Activated T-helper 1 cell treated with anti-CD3 and anti-CD28 coated beads, Interleukin-12 subunit alpha, Interleukin-12 subunit beta, Interleukin-2, Interleukin-4 antibody, amounts not matched to agents 30 ng/mL and 10 ng/mL and 1 ng/mL, durations not matched to agents 14 hours and 24 hours and 36 hours (primary cell): ENCODE measurements at regions of chr1 and their contacts with region 1.

Region 1: GRCh38 chr1:197868751-197869489 is 33.5 kb upstream of the C1orf53 start:
- DNase-seq: peak; percentile 25
- H3K4me3 Mint-ChIP-seq: no peak overlapping the region
- H3K27ac Mint-ChIP-seq: no peak overlapping the region
- H3K4me1 Mint-ChIP-seq: no peaks in the 10 kb centered on the region
- H3K27me3 Mint-ChIP-seq: peaks cover 29% of the 10 kb centered on the region

Region 2: DNA sequence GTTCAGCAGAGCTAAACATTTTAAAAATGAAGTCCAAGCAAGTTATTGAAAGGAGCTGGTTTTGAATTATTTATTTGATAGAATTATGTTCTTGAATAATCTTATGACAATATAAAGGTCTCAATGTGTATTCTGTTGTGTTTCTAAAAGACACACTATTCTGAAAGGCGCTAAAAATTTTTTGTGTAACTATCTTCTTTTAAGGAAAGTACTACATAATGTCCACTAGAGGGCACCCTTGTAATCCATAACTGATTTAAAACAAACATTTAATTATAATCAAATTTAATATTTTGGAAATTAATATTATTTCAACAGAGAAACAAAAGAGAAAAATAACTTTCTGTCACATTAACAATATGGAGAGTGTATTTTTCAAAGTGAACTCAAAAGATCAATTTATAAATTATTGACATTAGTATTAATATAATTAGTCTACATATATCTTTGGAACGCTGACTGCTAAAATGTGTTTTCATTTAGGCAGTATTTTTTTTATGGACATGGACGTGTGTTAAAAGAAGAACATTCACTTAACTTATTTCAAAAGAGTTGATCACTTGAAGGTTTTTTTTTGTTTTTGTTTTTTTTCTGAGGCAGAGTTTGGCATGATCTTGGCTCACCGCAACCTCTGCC is 342.1 kb before region 1 on chr1:
- intact Hi-C with region 1: loop called (anchors 1 kb)
- DNase-seq: no peak
- H3K4me3 Mint-ChIP-seq: no peak overlapping the region
- H3K27ac Mint-ChIP-seq: no peak overlapping the region
- H3K4me1 Mint-ChIP-seq: no peaks in the 10 kb centered on the region
- H3K27me3 Mint-ChIP-seq: no peaks in the 10 kb centered on the region

Region 3: GRCh38 chr1:197614916-197615692 is 253.8 kb before region 1 on chr1:
- intact Hi-C with region 1: loop called (anchors 1 kb)
- DNase-seq: no peak
- H3K4me3 Mint-ChIP-seq: no peak overlapping the region
- H3K27ac Mint-ChIP-seq: no peak overlapping the region
- H3K4me1 Mint-ChIP-seq: no peaks in the 10 kb centered on the region
- H3K27me3 Mint-ChIP-seq: no peaks in the 10 kb centered on the region

Region 4: DNA sequence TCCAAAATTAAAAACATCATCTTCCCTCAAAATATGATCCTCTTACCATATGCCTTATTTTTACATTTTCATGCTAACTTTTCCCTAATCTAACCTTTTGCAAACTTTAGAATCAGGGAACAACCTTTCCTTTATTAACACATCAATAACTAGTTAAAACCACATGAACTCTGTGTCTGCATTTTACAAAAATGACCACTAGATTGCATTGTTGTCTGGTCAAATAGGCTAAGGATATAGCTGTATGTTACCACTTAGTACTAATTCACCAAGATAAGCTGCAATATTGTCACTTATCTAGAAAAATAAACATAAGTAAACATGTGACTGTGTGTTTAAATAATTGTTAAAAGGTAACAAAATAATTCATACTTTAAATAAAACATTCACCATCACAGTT is 176.0 kb before region 1 on chr1:
- intact Hi-C with region 1: loop called (anchors 5 kb)
- DNase-seq: no peak
- H3K4me3 Mint-ChIP-seq: no peak overlapping the region
- H3K27ac Mint-ChIP-seq: no peak overlapping the region
- H3K4me1 Mint-ChIP-seq: peaks cover under 1% of the 10 kb centered on the region
- H3K27me3 Mint-ChIP-seq: no peaks in the 10 kb centered on the region

Region 5: GRCh38 chr1:197915862-197916499 is 47.1 kb after region 1 on chr1:
- intact Hi-C with region 1: no loop called
- DNase-seq: no peak
- H3K4me3 Mint-ChIP-seq: peak overlapping the region; percentile 71
- H3K27ac Mint-ChIP-seq: no peak overlapping the region
- H3K4me1 Mint-ChIP-seq: peaks cover 74% of the 10 kb centered on the region
- H3K27me3 Mint-ChIP-seq: peaks cover 97% of the 10 kb centered on the region